Activated CD4-positive, alpha-beta T cell treated with anti-CD3 and anti-CD28 coated beads for 36 hours (primary cell): ENCODE measurements at regions of chr19 and their contacts with region 1.

Region 1: DNA sequence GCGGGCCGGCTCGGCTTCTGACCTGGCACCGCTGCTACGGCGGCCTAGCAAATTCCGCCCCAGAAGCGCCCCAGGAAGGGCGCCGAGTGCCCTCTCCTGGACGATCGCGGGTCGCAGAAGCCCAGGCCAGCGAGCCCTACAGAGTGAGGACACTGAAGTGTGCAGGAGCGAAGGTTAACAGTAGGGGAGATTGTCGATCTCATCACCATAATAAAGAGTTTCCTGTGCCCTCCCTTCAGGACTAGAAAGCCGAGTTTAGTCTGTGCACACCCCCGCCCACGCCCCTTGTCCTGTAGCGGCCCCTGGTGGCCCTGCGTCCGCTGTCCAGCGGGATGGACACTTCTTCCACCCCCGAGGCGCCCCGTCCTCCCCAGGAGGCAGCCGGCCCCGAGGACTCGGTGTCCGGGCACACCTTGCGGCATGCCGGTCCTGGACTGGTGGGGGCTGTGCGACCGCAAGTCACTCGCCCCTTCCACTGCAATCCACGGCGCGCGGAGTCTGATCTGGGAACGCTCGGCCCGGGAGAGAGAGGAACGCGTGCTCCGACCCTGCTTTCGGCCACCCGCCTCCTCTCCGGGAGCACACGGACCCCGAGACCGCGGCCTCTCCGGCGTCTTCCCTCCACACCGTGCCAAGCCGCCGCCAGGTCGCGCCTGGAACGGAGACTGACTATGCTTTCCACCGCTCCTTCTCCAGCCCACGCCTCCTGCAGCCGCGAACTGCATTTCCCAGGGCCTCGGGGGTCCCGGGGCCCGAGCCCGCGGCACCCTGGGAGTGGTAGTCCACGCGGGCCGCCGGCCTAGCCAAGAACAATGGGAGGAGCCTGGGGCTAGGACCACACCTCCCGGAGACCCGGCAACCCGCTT is 769 bp upstream of the KMT2B start:
- DNase-seq: peak; percentile 98
- ATAC-seq: peak; percentile 61
- H3K4me3 Mint-ChIP-seq: peak overlapping the region; percentile 97
- H3K27ac Mint-ChIP-seq: peak overlapping the region; percentile 90
- H3K4me1 Mint-ChIP-seq: peaks cover 41% of the 10 kb centered on the region
- H3K27me3 Mint-ChIP-seq: no peaks in the 10 kb centered on the region

Region 2: GRCh38 chr19:35673121-35673804 is 43.8 kb before region 1 on chr19:
- CTCF ChIA-PET with region 1: no interaction called
- POLR2A ChIA-PET with region 1: interaction called, 3 read pairs
- intact Hi-C with region 1: loop called in 1 of 2 experiments (anchors 1 kb)
- DNase-seq: peak; percentile 83
- ATAC-seq: peak; percentile 90
- H3K4me3 Mint-ChIP-seq: peak overlapping the region; percentile 71
- H3K27ac Mint-ChIP-seq: no peak overlapping the region
- H3K4me1 Mint-ChIP-seq: peaks cover 9% of the 10 kb centered on the region
- H3K27me3 Mint-ChIP-seq: peaks cover 25% of the 10 kb centered on the region

Region 3: GRCh38 chr19:35702223-35703012 is 14.6 kb before region 1 on chr19:
- CTCF ChIA-PET with region 1: interaction called, 106 read pairs
- POLR2A ChIA-PET with region 1: interaction called, 34 read pairs
- intact Hi-C with region 1: loop called (anchors 1 to 2 kb)
- DNase-seq: peak; percentile 97
- ATAC-seq: peak; percentile 99
- H3K4me3 Mint-ChIP-seq: peak overlapping the region; percentile 83
- H3K27ac Mint-ChIP-seq: peak overlapping the region; percentile 99
- H3K4me1 Mint-ChIP-seq: peaks cover 8% of the 10 kb centered on the region
- H3K27me3 Mint-ChIP-seq: no peaks in the 10 kb centered on the region

Region 4: DNA sequence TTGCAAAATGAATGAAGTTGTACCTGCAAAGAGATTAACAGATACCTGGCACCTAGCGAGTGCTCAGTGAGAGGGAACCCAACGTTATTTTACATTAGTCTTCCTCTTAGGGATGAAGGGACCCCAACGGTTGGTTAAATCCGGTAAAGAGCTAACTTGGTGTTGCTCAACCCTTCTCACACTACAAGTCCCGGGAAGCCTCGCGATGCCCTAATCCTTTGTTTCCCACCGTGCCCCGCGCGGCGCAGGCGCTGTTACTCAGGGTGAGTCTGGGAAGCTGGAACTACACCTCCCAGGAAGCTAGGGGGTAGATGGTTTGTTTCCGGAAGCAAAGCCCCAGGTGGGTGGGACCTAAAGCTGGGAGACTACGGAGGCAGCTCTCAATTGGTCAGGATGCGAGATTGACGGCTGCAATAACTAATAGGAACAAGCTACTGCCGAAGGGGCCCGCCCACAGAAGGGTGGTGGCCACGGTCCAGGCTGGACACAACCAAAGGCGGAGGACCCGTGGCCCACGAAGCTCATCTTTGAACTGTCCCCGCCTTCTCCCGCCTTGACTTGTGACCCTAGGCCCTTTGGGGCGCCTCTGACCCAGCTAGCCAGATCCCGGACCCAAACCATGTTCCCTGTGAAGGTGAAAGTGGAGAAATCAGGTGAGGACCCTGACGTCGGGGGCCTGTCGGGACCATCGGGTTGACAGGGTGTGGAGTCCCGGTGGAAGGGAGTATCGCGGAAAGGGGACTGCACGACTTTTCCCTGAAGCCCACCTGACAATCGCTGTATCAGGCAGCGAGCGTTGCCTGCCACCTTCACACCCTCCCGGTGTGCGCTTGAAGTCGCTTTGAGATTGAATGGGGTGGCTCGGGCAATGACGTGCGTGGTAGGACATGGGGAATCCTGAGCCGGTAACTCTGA is 31.3 kb after region 1 on chr19 and contains the start of gene LIN37:
- CTCF ChIA-PET with region 1: interaction called, 8 read pairs
- POLR2A ChIA-PET with region 1: interaction called, 10 read pairs
- intact Hi-C with region 1: loop called (anchors 1 kb)
- DNase-seq: peak; percentile 99
- ATAC-seq: peak; percentile 81
- H3K4me3 Mint-ChIP-seq: peak within 1 kb of the TSS; percentile 89
- H3K27ac Mint-ChIP-seq: peak within 1 kb of the TSS; percentile 94
- H3K4me1 Mint-ChIP-seq: peaks cover 40% of the 10 kb centered on the region
- H3K27me3 Mint-ChIP-seq: no peaks in the 10 kb centered on the region
- total RNA-seq, gene LIN37: 8.4 to 12.7 TPM

Region 5: DNA sequence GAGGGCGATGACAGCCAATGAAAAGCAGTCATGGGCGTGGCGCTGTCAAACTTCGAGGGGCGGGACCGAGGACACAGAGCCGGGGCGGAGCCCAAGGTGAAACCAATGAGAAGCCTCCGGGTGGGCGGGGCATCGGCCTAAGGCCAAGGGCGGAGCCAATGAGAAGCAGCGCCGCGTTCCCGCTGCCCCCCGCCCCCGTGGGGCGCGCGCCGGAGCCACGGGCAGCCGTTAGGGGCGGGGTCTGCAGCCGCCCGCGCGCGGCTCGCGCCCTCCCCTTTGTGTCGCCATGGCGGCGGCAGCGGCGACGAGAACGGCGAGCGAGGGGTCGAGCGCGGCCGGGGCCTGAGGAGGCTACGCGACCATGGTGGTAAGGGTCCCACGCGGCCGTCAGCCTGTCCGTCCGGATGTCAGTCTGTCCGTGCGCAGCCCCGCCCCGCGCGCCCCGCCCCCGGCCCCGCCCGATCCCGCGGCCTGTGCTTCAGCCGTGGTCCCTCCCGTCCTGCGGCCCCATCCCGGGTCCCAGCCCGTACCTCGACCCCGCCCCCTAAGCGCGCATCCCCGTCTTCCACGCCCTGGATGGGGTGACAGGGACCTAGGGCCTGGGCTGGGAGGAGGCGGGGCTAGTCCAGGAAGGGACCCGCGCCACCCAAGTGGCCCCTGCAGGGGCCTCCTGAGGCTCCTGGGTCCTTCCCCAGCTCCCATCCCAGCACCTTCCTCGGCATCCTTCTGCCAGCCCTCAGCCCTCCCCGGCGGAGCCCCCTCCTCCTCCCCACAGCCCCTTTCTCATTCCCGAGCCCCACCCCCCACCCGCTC is 58.5 kb after region 1 on chr19 and contains the start of gene ARHGAP33:
- CTCF ChIA-PET with region 1: no interaction called
- POLR2A ChIA-PET with region 1: no interaction called
- intact Hi-C with region 1: loop called in 1 of 2 experiments (anchors 1 kb)
- DNase-seq: peak; percentile 100
- ATAC-seq: peak; percentile 98
- H3K4me3 Mint-ChIP-seq: peak within 1 kb of the TSS; percentile 75
- H3K27ac Mint-ChIP-seq: no peak within 1 kb of the TSS
- H3K4me1 Mint-ChIP-seq: peaks cover 12% of the 10 kb centered on the region
- H3K27me3 Mint-ChIP-seq: no peaks in the 10 kb centered on the region
- total RNA-seq, gene ARHGAP33: 27.8 to 35.2 TPM

Region 6: GRCh38 chr19:35899547-35900214 is 182.6 kb after region 1 on chr19:
- CTCF ChIA-PET with region 1: no interaction called
- POLR2A ChIA-PET with region 1: no interaction called
- intact Hi-C with region 1: loop called (anchors 1 kb)
- DNase-seq: peak; percentile 94
- ATAC-seq: peak; percentile 54
- H3K4me3 Mint-ChIP-seq: peak overlapping the region; percentile 75
- H3K27ac Mint-ChIP-seq: peak overlapping the region; percentile 94
- H3K4me1 Mint-ChIP-seq: peaks cover 65% of the 10 kb centered on the region
- H3K27me3 Mint-ChIP-seq: no peaks in the 10 kb centered on the region